ENCODE measurements at regions of chr2 and their contacts with region 1.

Region 1: DNA sequence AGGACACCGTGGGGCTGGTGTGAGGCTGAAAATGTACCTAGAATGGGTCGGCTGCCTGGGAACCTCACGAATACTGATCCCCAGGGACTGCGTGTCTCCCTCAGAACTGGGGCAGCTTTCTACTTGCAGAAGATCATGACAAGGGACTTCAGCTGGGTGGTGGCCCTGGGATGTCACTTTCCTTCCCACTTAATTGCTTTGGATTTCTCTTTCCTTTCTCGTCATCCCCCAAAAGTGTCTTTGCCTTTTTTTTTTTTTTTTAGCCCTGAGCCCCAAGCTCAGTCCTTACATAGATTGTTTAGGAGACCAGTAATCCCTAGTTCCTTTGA is 278.9 kb downstream of the GBX2 start:
- DNase-seq: no peak
- ATAC-seq: no peak
- H3K4me3 ChIP-seq: peak overlapping the region in 1 of 3 experiments; percentile 29; a peak in 2 of 6 replicates
- H3K27ac ChIP-seq: peak overlapping the region; percentile 74
- H3K4me1 ChIP-seq: peaks cover 32% of the 10 kb centered on the region
- H3K27me3 ChIP-seq: no peaks in the 10 kb centered on the region
- CTCF ChIP-seq: no peak
- EP300 ChIP-seq: no peak
- POLR2A ChIP-seq: no peak
- RAD21 ChIP-seq: no peak

Region 2: DNA sequence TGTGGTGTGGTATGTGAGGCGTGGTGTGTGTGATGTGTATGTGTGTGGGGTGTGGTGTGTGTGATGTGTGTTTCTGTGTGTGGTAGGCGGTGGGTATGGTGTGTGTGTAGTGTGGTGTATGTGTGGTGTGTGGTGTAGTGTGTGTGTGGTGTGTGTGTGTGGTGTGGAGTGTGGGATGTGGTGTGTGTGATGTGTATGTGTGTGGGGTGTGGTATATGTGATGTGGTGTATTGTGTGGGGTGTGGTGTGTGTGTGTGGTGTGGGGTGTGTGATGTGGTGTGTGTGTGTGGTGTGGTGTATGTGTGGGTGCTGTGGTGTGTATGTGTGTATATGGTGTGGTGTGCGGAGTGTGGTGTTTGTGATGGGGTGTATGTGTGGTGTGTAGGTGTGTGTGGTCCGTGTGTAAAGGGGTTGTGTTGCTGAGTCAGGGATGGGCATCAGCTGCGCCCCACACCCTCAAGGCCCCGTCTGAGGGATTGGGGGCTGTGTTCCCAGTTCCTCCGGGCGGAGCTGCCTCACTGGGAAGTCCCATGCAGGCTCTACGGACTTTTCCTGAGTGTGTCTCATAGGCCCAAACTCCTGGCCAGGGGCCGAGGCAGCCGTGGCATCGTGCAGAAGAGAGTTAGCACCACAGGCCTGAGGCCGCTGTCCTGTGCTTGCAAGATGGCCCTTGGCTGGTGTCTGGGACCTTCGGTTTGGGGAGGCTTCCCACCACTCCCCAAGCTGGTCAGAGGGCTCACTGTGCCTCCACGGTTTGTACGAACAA is 1374.2 kb before region 1 on chr2:
- CTCF ChIA-PET with region 1: no interaction called
- POLR2A ChIA-PET with region 1: no interaction called
- in situ Hi-C with region 1: no loop called
- intact Hi-C with region 1: no loop called
- DNase-seq: no peak
- ATAC-seq: peak; percentile 57
- H3K4me3 ChIP-seq: no peak overlapping the region
- H3K27ac ChIP-seq: no peak overlapping the region
- H3K4me1 ChIP-seq: no peaks in the 10 kb centered on the region
- H3K27me3 ChIP-seq: no peaks in the 10 kb centered on the region
- CTCF ChIP-seq: no peak
- EP300 ChIP-seq: no peak
- POLR2A ChIP-seq: no peak
- RAD21 ChIP-seq: no peak

Region 3: DNA sequence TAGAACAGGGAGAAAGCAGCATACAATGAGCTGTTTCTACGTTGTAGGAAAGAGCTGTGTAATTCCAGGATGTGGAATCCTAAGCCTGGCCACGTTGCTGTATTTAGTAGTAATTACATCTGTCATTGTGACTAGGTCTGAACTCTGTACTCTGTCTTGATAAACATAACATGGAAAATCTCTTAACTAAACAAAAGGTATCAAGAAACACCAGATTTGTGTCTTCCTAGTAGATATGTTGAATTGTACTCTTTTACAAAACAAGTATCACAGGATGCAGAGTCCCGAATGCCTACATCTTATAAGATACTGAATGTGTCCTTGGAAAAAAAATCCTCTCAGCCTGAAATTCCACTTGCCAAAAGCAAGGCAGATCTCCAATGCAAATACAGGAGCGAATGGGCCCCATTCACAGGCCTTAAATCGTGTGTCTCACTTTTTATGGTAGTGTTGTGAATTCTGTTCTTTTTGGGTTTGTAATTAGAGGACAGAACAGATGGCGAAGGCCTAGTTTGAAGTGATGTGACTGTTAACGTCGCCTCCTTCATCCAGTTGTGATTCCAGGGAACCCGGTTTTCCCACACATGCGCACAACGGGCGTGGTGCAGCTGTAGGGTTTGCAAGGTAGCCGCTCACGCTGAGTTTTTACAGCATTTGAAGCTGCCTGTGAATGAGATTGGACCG is 32.4 kb after region 1 on chr2:
- CTCF ChIA-PET with region 1: no interaction called
- POLR2A ChIA-PET with region 1: no interaction called
- in situ Hi-C with region 1: no loop called
- intact Hi-C with region 1: loop called (anchors 5 kb)
- DNase-seq: peak; percentile 89
- ATAC-seq: peak; percentile 73
- H3K4me3 ChIP-seq: no peak overlapping the region; a peak in 1 of 6 replicates
- H3K27ac ChIP-seq: peak overlapping the region; percentile 72
- H3K4me1 ChIP-seq: peaks cover 57% of the 10 kb centered on the region
- H3K27me3 ChIP-seq: no peaks in the 10 kb centered on the region
- CTCF ChIP-seq: no peak
- EP300 ChIP-seq: peak in 1 of 2 experiments; percentile 32; a peak in 1 of 4 replicates
- POLR2A ChIP-seq: no peak
- RAD21 ChIP-seq: peak; percentile 31; the same call in 1 of the 2 replicates

Measured in HepG2 (cell line).